CD4-positive, alpha-beta memory T cell (primary cell): ENCODE measurements at regions of chr1 and their contacts with region 1.

Region 1: GRCh38 chr1:2148691-2149090 is 45.9 kb downstream of the FAAP20 start:
- DNase-seq: peak; percentile 74 to 89 (median 81)
- H3K4me3 ChIP-seq: peak overlapping the region in 1 of 2 donors; percentile 44
- H3K4me3 Mint-ChIP-seq: no peak overlapping the region
- H3K27ac ChIP-seq: peak overlapping the region; percentile 58
- H3K27ac Mint-ChIP-seq: no peak overlapping the region
- H3K4me1 ChIP-seq: peaks cover 47% of the 10 kb centered on the region
- H3K4me1 Mint-ChIP-seq: peaks cover 6 to 29% (median 13%) of the 10 kb centered on the region in 4 donors
- H3K27me3 ChIP-seq: no peaks in the 10 kb centered on the region
- H3K27me3 Mint-ChIP-seq: no peaks in the 10 kb centered on the region

Region 2: DNA sequence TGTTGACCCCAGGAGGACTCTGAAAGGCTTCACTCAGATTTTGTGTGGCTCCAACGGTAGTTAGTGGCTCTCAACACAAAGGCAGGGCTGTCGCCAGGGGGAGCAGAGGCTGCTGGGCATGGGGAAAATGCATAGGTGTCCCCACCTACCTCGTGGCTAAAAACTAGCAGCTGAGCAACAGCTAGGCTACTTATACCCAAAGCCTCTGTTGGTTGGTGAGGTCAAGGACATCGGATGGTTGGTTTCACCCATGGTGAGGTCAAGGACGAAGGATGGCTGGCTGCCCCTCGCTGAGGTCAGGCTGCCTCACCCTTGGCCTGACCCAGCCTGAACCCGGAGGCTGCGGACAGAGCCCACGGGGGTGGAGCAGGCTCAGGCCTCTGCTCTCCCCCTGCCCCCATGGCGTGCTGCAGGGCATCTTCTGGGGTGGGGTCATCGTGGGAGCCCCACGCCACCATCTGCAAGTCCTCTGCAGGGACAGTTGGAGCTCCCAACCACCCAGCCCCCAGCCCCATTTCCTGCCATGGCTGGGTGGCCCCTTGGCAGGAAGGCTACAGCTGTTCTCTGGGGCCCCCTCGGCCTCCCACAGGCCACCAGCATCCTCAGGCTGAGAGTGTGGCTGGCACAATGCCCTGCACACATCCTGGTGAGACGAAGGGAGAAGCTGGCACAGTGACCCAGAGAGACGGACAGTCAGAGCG is 249.3 kb before region 1 on chr1:
- CTCF ChIA-PET with region 1: no interaction called
- POLR2A ChIA-PET with region 1: no interaction called
- intact Hi-C with region 1: no loop called
- DNase-seq: no peak
- H3K4me3 ChIP-seq: no peak overlapping the region
- H3K4me3 Mint-ChIP-seq: no peak overlapping the region
- H3K27ac ChIP-seq: no peak overlapping the region
- H3K27ac Mint-ChIP-seq: no peak overlapping the region
- H3K4me1 ChIP-seq: peaks cover 11% of the 10 kb centered on the region
- H3K4me1 Mint-ChIP-seq: peaks cover 2 to 13% (median 10%) of the 10 kb centered on the region in 4 donors
- H3K27me3 ChIP-seq: no peaks in the 10 kb centered on the region
- H3K27me3 Mint-ChIP-seq: peaks cover 0 to 4% of the 10 kb centered on the region in 2 donors

Region 3: GRCh38 chr1:2189459-2190425 is 41.1 kb after region 1 on chr1:
- CTCF ChIA-PET with region 1: interaction called, 4 read pairs
- POLR2A ChIA-PET with region 1: interaction called, 7 read pairs
- intact Hi-C with region 1: loop called (anchors 5 kb)
- DNase-seq: peak; percentile 82 to 92 (median 90)
- H3K4me3 ChIP-seq: peak overlapping the region; percentile 52 to 65
- H3K4me3 Mint-ChIP-seq: peak overlapping the region; percentile 61 to 86 (median 82)
- H3K27ac ChIP-seq: peak overlapping the region; percentile 73
- H3K27ac Mint-ChIP-seq: peak overlapping the region; percentile 91 to 99 (median 94)
- H3K4me1 ChIP-seq: peaks cover 29% of the 10 kb centered on the region
- H3K4me1 Mint-ChIP-seq: peaks cover 5 to 32% (median 13%) of the 10 kb centered on the region in 4 donors
- H3K27me3 ChIP-seq: no peaks in the 10 kb centered on the region
- H3K27me3 Mint-ChIP-seq: no peaks in the 10 kb centered on the region

Region 4: DNA sequence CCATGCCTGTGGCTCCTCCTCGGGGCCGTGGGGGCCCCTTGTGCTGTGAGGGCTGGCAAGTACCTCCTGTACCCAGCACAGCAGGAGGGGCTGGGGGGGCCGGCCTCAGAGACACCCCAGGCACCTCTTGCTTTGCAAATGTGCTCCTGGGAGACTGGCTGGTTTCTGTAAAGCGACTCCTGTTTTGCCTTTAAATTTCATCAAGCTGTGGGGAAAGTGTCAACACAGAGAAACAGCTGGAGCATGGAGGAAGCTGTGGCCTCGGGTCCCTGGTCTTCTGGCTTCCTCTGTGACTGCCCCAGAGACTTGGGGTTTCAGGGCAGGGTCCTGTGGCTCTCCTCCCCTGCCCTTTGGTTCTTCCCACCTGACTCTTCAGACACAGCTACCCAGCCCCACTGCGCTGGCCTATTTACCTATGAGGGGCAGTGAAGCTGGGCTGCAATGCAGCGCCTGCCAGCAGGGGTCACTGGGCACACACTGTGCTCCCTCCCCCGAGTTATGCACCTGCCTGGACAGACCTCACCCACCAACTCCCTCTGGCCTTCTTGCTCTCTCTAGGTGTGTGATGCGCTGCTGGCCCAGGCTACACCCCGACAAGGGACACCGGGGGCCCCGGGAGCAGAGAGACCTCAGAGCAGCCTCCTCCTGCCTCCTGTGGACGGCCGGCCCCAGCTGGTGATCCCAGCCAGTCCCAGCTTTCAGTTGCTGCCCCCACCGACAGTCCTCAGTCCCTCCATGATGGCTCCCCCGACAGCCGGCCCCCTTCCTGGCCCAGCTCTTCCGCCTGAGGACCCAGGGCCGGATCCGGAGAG is 281.3 kb after region 1 on chr1:
- CTCF ChIA-PET with region 1: no interaction called
- POLR2A ChIA-PET with region 1: no interaction called
- intact Hi-C with region 1: no loop called
- DNase-seq: no peak
- H3K4me3 ChIP-seq: no peak overlapping the region
- H3K4me3 Mint-ChIP-seq: no peak overlapping the region
- H3K27ac ChIP-seq: no peak overlapping the region
- H3K27ac Mint-ChIP-seq: no peak overlapping the region
- H3K4me1 ChIP-seq: no peaks in the 10 kb centered on the region
- H3K4me1 Mint-ChIP-seq: no peaks in the 10 kb centered on the region
- H3K27me3 ChIP-seq: no peaks in the 10 kb centered on the region
- H3K27me3 Mint-ChIP-seq: no peaks in the 10 kb centered on the region